CD4-positive, alpha-beta T cell (primary cell): ENCODE measurements at regions of chr1 and their contacts with region 1.

Region 1: GRCh38 chr1:167263819-167264464 is 43.3 kb downstream of the POU2F1 start:
- DNase-seq: peak in 4 of 14 experiments; percentile 4 to 29 (median 19)
- ATAC-seq: peak; percentile 57
- H3K4me3 ChIP-seq: no peak overlapping the region
- H3K4me3 Mint-ChIP-seq: no peak overlapping the region
- H3K27ac ChIP-seq: no peak overlapping the region
- H3K27ac Mint-ChIP-seq: no peak overlapping the region
- H3K4me1 ChIP-seq: peaks cover 24% of the 10 kb centered on the region
- H3K4me1 Mint-ChIP-seq: peaks cover 31% of the 10 kb centered on the region
- H3K27me3 ChIP-seq: no peaks in the 10 kb centered on the region
- H3K27me3 Mint-ChIP-seq: no peaks in the 10 kb centered on the region
- CTCF ChIP-seq: no peak

Region 2: DNA sequence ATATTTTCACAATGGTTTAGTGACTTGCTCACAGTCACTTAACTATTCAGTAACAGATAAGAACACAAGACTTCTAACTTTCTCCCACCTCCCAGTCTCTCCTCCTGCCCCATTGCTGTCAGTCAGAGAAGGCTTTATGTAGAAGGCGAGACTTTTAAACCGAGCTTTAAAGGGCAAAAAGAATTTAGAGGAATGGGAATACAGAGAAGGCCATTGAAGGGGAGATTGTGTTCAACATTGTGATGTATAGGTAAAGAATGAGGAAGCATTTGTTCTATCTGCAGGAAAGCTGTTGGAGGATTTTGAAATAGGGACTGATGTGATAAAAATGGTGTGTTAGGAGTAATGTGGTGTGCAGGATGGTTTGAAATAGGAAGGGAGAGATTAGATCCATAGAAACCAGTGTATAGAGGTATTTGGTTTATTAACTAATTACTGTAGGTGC is 36.0 kb before region 1 on chr1:
- CTCF ChIA-PET with region 1: interaction called, 5 read pairs
- POLR2A ChIA-PET with region 1: interaction called, 70 read pairs
- intact Hi-C with region 1: loop called in 1 of 2 experiments (anchors 5 kb)
- DNase-seq: no peak
- ATAC-seq: no peak
- H3K4me3 ChIP-seq: no peak overlapping the region
- H3K4me3 Mint-ChIP-seq: no peak overlapping the region
- H3K27ac ChIP-seq: no peak overlapping the region
- H3K27ac Mint-ChIP-seq: no peak overlapping the region
- H3K4me1 ChIP-seq: peaks cover 4% of the 10 kb centered on the region
- H3K4me1 Mint-ChIP-seq: peaks cover 73% of the 10 kb centered on the region
- H3K27me3 ChIP-seq: no peaks in the 10 kb centered on the region
- H3K27me3 Mint-ChIP-seq: no peaks in the 10 kb centered on the region
- CTCF ChIP-seq: no peak

Region 3: GRCh38 chr1:167775178-167775577 is 511.2 kb after region 1 on chr1:
- CTCF ChIA-PET with region 1: no interaction called
- POLR2A ChIA-PET with region 1: no interaction called
- intact Hi-C with region 1: no loop called
- DNase-seq: no peak
- ATAC-seq: no peak
- H3K4me3 ChIP-seq: no peak overlapping the region
- H3K4me3 Mint-ChIP-seq: no peak overlapping the region
- H3K27ac ChIP-seq: no peak overlapping the region
- H3K27ac Mint-ChIP-seq: no peak overlapping the region
- H3K4me1 ChIP-seq: no peaks in the 10 kb centered on the region
- H3K4me1 Mint-ChIP-seq: peaks cover 13% of the 10 kb centered on the region
- H3K27me3 ChIP-seq: no peaks in the 10 kb centered on the region
- H3K27me3 Mint-ChIP-seq: no peaks in the 10 kb centered on the region
- CTCF ChIP-seq: no peak